GM12878 (cell line): ENCODE measurements at regions of chrX and their contacts with region 1.

Region 1: GRCh38 chrX:112642349-112642748 is 37.4 kb downstream of the LHFPL1 start:
- DNase-seq: no peak
- ATAC-seq: peak; percentile 24
- H3K4me3 ChIP-seq: no peak overlapping the region
- H3K27ac ChIP-seq: no peak overlapping the region
- H3K4me1 ChIP-seq: peaks cover 9% of the 10 kb centered on the region
- H3K27me3 ChIP-seq: no peaks in the 10 kb centered on the region
- CTCF ChIP-seq: peak; percentile 62 to 80 (median 64)
- EP300 ChIP-seq: no peak
- POLR2A ChIP-seq: no peak
- RAD21 ChIP-seq: peak; percentile 82

Region 2: GRCh38 chrX:111702986-111703385 is 939.4 kb before region 1 on chrX:
- CTCF ChIA-PET with region 1: no interaction called
- POLR2A ChIA-PET with region 1: no interaction called
- RAD21 ChIA-PET with region 1: no interaction called
- SMC1A ChIA-PET with region 1: no interaction called
- in situ Hi-C with region 1: no loop called
- intact Hi-C with region 1: no loop called
- DNase-seq: no peak
- ATAC-seq: no peak
- H3K4me3 ChIP-seq: no peak overlapping the region
- H3K27ac ChIP-seq: no peak overlapping the region
- H3K4me1 ChIP-seq: no peaks in the 10 kb centered on the region
- H3K27me3 ChIP-seq: no peaks in the 10 kb centered on the region
- CTCF ChIP-seq: no peak
- EP300 ChIP-seq: no peak
- POLR2A ChIP-seq: no peak
- RAD21 ChIP-seq: no peak

Region 3: GRCh38 chrX:111955901-111956300 is 686.4 kb before region 1 on chrX:
- CTCF ChIA-PET with region 1: no interaction called
- POLR2A ChIA-PET with region 1: no interaction called
- RAD21 ChIA-PET with region 1: no interaction called
- SMC1A ChIA-PET with region 1: no interaction called
- in situ Hi-C with region 1: no loop called
- intact Hi-C with region 1: no loop called
- DNase-seq: no peak
- ATAC-seq: no peak
- H3K4me3 ChIP-seq: no peak overlapping the region
- H3K27ac ChIP-seq: no peak overlapping the region
- H3K4me1 ChIP-seq: no peaks in the 10 kb centered on the region
- H3K27me3 ChIP-seq: no peaks in the 10 kb centered on the region
- CTCF ChIP-seq: no peak
- EP300 ChIP-seq: no peak
- POLR2A ChIP-seq: no peak
- RAD21 ChIP-seq: no peak

Region 4: DNA sequence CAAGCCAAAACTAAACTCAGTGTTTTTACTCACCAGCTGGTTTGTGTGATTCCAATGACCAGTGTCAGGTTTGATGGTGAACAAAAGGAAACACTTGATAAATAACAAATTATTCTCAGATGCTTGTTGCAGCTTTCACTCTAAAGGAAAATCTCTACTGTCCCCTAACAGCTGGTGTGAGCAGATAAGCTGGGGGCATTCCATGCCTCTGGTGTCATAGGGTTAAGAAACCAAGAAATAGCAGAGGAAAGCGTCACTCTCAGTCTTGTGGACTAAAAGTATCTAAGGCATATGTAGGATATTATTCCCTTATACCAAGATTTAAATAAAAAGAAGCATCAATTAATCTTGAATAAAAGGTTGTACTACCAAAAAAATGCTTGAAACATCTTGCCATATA is 584.1 kb before region 1 on chrX:
- CTCF ChIA-PET with region 1: interaction called, 3 read pairs
- POLR2A ChIA-PET with region 1: no interaction called
- RAD21 ChIA-PET with region 1: no interaction called
- SMC1A ChIA-PET with region 1: interaction called, 3 read pairs
- in situ Hi-C with region 1: no loop called
- intact Hi-C with region 1: loop called (anchors 10 kb)
- DNase-seq: no peak
- ATAC-seq: no peak
- H3K4me3 ChIP-seq: no peak overlapping the region
- H3K27ac ChIP-seq: no peak overlapping the region
- H3K4me1 ChIP-seq: no peaks in the 10 kb centered on the region
- H3K27me3 ChIP-seq: no peaks in the 10 kb centered on the region
- CTCF ChIP-seq: no peak
- EP300 ChIP-seq: no peak
- POLR2A ChIP-seq: no peak
- RAD21 ChIP-seq: no peak

Region 5: GRCh38 chrX:112678831-112679230 is 36.5 kb after region 1 on chrX:
- CTCF ChIA-PET with region 1: interaction called, 4 read pairs
- POLR2A ChIA-PET with region 1: interaction called, 3 read pairs
- RAD21 ChIA-PET with region 1: interaction called, 12 read pairs
- SMC1A ChIA-PET with region 1: interaction called, 10 read pairs
- in situ Hi-C with region 1: no loop called
- intact Hi-C with region 1: loop called (anchors 1 kb)
- DNase-seq: no peak
- ATAC-seq: peak; percentile 73
- H3K4me3 ChIP-seq: no peak overlapping the region; the same call in 1 of the 2 replicates
- H3K27ac ChIP-seq: peak overlapping the region; percentile 76
- H3K4me1 ChIP-seq: no peaks in the 10 kb centered on the region
- H3K27me3 ChIP-seq: no peaks in the 10 kb centered on the region
- CTCF ChIP-seq: no peak
- EP300 ChIP-seq: no peak
- POLR2A ChIP-seq: no peak
- RAD21 ChIP-seq: no peak

Region 6: DNA sequence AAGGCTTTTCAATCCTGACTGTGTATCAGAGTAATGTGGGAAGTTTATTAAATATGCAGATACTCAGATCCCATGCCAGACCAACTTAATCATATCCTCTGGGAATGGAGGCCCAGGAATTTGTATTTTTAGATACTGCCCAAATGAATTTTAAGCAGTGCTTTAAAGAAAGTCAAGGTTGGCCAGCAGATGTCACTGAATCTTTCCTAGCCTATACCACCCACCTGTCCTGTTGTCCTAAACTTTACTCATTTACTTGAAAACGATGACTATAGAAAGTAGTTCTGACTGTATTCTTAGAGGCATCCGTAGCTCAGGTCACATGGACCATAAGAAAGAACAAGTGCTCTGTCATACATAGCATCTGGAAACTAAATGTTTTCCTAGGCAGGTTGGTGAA is 118.3 kb after region 1 on chrX:
- CTCF ChIA-PET with region 1: no interaction called
- POLR2A ChIA-PET with region 1: no interaction called
- RAD21 ChIA-PET with region 1: no interaction called
- SMC1A ChIA-PET with region 1: no interaction called
- in situ Hi-C with region 1: no loop called
- intact Hi-C with region 1: loop called (anchors 1 kb)
- DNase-seq: peak; percentile 20
- ATAC-seq: peak; percentile 60
- H3K4me3 ChIP-seq: no peak overlapping the region
- H3K27ac ChIP-seq: peak overlapping the region; percentile 34; the same call in 1 of the 2 replicates
- H3K4me1 ChIP-seq: no peaks in the 10 kb centered on the region
- H3K27me3 ChIP-seq: no peaks in the 10 kb centered on the region
- CTCF ChIP-seq: peak in 2 of 3 experiments; percentile 27 to 31; a peak in 3 of 6 replicates
- EP300 ChIP-seq: no peak
- POLR2A ChIP-seq: no peak
- RAD21 ChIP-seq: peak; percentile 49